Esophagus muscularis mucosa (tissue), 4 donors: ENCODE measurements at regions of chr11 and their contacts with region 1.

Region 1: GRCh38 chr11:30586251-30587144 is at the start of gene MPPED2:
- DNase-seq: no peak
- H3K4me3 ChIP-seq: peak within 1 kb of the TSS; percentile 71 to 89 (median 77)
- H3K27ac ChIP-seq: peak within 1 kb of the TSS; percentile 84 to 90 (median 87)
- H3K4me1 ChIP-seq: peaks cover 0 to 49% (median 39%) of the 10 kb centered on the region in 4 donors
- H3K27me3 ChIP-seq: peaks cover 0 to 6% (median 0%) of the 10 kb centered on the region in 4 donors
- CTCF ChIP-seq: peak; percentile 20 to 62 (median 39)
- EP300 ChIP-seq: no peak
- POLR2A ChIP-seq: no peak
- total RNA-seq, gene MPPED2: 2.2 to 4.6 (median 3.3) TPM

Region 2: GRCh38 chr11:30358536-30358935 is 228.0 kb before region 1 on chr11:
- intact Hi-C with region 1: loop called (anchors 10 kb)
- DNase-seq: no peak
- H3K4me3 ChIP-seq: no peak overlapping the region
- H3K27ac ChIP-seq: no peak overlapping the region
- H3K4me1 ChIP-seq: peaks cover 6 to 33% (median 26%) of the 10 kb centered on the region in 4 donors
- H3K27me3 ChIP-seq: no peaks in the 10 kb centered on the region
- CTCF ChIP-seq: no peak
- EP300 ChIP-seq: no peak
- POLR2A ChIP-seq: no peak

Region 3: DNA sequence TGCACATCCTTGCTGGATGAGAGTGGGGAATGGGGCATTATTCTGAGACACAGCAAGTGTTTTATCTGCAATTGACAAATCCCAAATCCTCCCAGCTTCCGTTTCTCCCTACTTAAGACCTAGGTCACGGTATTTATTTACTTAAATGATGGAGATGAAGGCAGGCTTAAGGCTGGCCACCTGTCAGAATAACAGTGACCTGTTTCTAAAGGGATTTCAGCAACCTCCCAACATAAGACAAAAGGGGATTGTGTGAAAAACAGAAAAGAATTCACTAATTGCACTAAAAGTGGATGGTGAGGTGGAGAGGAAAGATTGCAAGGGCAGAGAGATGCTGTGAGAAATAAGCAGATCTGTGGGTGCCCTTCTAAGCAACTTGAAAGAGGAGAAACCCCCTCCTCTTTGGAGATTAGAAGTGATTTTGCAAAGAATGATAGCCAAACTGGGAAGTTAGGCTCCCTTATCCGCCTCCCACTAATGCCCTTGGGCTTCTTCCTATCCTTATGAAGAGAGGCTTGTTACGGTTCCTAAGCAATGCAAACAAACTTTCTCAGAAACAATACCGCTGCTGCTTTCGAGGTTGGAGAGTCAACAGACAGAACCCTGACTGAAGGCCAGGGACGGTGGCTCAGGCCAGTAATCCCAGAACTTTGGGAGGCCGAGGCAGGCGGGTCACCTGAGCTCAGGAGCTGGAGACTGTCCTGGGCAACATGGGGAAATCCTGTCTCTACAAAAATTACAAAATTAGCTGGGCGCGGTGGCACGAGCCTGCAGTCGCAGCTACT is 179.3 kb before region 1 on chr11:
- intact Hi-C with region 1: no loop called
- DNase-seq: no peak
- H3K4me3 ChIP-seq: no peak overlapping the region
- H3K27ac ChIP-seq: no peak overlapping the region
- H3K4me1 ChIP-seq: peaks cover 0 to 25% (median 9%) of the 10 kb centered on the region in 4 donors
- H3K27me3 ChIP-seq: no peaks in the 10 kb centered on the region
- CTCF ChIP-seq: no peak
- EP300 ChIP-seq: no peak
- POLR2A ChIP-seq: no peak

Region 4: GRCh38 chr11:30488304-30488998 is 98.0 kb before region 1 on chr11:
- intact Hi-C with region 1: loop called (anchors 10 kb)
- DNase-seq: no peak
- H3K4me3 ChIP-seq: peak overlapping the region; percentile 7 to 40 (median 36)
- H3K27ac ChIP-seq: peak overlapping the region; percentile 50 to 67 (median 58)
- H3K4me1 ChIP-seq: peaks cover 26 to 41% (median 34%) of the 10 kb centered on the region in 4 donors
- H3K27me3 ChIP-seq: no peaks in the 10 kb centered on the region
- CTCF ChIP-seq: no peak
- EP300 ChIP-seq: no peak
- POLR2A ChIP-seq: no peak

Region 5: DNA sequence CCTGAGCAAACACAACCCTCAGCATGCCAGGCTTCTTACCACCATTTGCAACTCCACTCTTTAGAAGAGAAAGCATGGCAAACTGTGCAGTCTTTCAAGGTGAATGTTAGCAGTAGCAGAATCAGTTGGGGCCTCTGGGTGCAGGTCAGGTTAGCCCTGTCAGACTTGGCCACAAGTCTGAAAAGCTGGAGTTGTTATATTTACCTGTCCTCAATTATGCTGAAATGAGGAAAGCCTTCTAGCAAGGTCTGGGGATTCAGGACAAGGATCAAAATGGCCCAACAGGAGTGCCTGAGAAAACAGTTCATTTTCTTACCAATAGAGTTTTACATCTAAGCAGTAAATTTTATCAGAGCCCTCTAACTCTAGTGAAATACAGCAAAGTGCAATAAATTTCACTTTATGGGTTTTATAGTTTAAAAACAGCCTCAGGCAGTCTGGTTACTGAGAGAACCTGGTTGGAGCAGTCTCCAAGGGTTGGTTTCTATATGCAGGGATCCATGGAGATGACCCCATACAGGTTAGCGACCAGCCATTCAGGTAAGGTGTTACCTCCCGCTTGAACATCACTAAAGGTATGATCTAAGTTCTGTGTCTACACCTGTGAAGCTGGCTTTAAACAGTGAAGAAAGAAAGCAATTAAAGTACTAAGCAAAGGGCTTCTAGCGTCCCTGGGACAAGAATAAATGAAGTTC is 212.2 kb after region 1 on chr11:
- intact Hi-C with region 1: loop called (anchors 10 kb)
- DNase-seq: no peak
- H3K4me3 ChIP-seq: no peak overlapping the region
- H3K27ac ChIP-seq: no peak overlapping the region
- H3K4me1 ChIP-seq: no peaks in the 10 kb centered on the region
- H3K27me3 ChIP-seq: no peaks in the 10 kb centered on the region
- CTCF ChIP-seq: no peak
- EP300 ChIP-seq: no peak
- POLR2A ChIP-seq: no peak

Region 6: DNA sequence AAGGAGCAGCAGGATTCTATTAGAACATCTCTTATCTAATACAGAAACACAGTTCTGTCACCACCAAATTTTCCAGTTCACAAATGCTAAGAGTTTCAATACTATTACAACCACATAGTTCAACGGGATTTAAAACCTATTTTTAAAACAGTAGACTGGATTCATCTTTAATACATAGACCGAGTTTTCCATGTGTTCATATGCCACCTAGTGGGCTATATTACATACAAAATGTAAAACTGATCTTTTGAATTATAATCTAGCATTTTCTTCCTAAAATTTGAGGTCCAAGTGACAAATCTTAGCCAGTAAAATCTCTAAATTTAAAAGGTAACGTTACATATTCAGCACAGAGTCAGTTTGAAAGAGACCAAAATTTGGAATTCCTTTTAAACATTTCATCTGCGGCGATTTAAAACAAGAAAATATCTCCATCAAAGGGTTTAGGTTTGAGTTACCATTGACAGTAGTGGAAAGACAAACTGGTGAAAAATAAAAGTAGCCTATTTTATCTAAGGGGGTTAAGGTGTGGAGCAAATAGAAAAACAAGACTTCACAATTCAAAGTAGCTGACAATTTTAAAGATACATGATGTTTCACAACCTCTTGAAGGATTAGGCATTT is 269.0 kb after region 1 on chr11:
- intact Hi-C with region 1: loop called (anchors 10 kb)
- DNase-seq: no peak
- H3K4me3 ChIP-seq: no peak overlapping the region
- H3K27ac ChIP-seq: no peak overlapping the region
- H3K4me1 ChIP-seq: peaks cover 0 to 9% (median 0%) of the 10 kb centered on the region in 4 donors
- H3K27me3 ChIP-seq: no peaks in the 10 kb centered on the region
- CTCF ChIP-seq: peak; percentile 40 to 49 (median 48)
- EP300 ChIP-seq: no peak
- POLR2A ChIP-seq: no peak